ENCODE measurements at regions of chr17 and their contacts with region 1.

Region 1: GRCh38 chr17:75059369-75060345 is 12.6 kb downstream of the KCTD2 start:
- DNase-seq: no peak
- ATAC-seq: peak; percentile 78
- H3K4me3 ChIP-seq: no peak overlapping the region
- H3K27ac ChIP-seq: no peak overlapping the region
- H3K4me1 ChIP-seq: no peaks in the 10 kb centered on the region
- H3K27me3 ChIP-seq: no peaks in the 10 kb centered on the region
- CTCF ChIP-seq: no peak

Region 2: GRCh38 chr17:75075597-75076336 is 16.1 kb after region 1 on chr17:
- CTCF ChIA-PET with region 1: interaction called, 7 read pairs
- POLR2A ChIA-PET with region 1: interaction called, 10 read pairs
- in situ Hi-C with region 1: no loop called
- intact Hi-C with region 1: no loop called
- DNase-seq: no peak
- ATAC-seq: 0 out of 2 replicates have a peak, but pooled peaks have one; percentile 9
- H3K4me3 ChIP-seq: no peak overlapping the region
- H3K27ac ChIP-seq: no peak overlapping the region
- H3K4me1 ChIP-seq: peaks cover 16% of the 10 kb centered on the region
- H3K27me3 ChIP-seq: no peaks in the 10 kb centered on the region
- CTCF ChIP-seq: no peak

Measured in Panc1 (cell line).